Posterior vena cava (tissue), 2 donors: ENCODE measurements at regions of chr10 and their contacts with region 1.

Region 1: DNA sequence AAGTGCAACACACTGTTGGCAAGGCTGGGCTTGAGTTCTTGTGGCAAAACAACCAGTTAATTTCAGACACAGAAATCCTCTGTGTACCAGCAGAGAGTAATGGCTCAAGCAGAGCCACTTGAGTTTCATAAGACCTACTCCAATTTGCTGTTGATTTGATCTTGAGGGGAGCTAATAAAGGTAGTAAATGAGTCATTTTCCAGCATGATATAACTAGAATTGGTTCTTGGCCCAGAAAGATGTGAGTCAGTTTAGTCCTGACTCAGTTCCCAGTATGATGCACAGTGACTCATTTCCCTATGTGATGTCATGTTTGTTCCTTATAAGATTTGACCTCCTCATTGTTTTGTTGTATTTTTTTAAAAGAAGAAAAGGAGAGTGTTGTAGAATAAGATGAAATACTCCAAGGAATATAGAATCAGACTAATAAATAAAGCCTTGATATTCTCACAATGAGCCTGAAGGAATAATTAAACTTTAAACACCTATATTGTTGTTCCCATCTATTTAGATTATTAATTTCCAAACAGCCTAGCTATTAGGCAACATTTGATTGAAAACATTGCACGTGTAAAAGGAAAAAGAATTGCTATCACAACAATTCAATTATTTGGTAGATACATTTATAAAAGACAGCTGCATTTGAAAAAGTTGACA is 186.2 kb downstream of the REEP3 start:
- DNase-seq: no peak

Region 2: GRCh38 chr10:63173468-63174232 is 533.7 kb before region 1 on chr10:
- intact Hi-C with region 1: loop called in 1 of 2 experiments (anchors 10 kb)
- DNase-seq: no peak

Region 3: GRCh38 chr10:63227207-63227915 is 480.0 kb before region 1 on chr10:
- intact Hi-C with region 1: loop called in 1 of 2 experiments (anchors 10 kb)
- DNase-seq: no peak

Region 4: GRCh38 chr10:63465293-63466143 is 241.9 kb before region 1 on chr10 and contains the start of gene JMJD1C:
- intact Hi-C with region 1: loop called in 1 of 2 experiments (anchors 10 kb)
- DNase-seq: peak; percentile 94
- total RNA-seq, gene JMJD1C: 84.1 to 91.1 TPM

Region 5: DNA sequence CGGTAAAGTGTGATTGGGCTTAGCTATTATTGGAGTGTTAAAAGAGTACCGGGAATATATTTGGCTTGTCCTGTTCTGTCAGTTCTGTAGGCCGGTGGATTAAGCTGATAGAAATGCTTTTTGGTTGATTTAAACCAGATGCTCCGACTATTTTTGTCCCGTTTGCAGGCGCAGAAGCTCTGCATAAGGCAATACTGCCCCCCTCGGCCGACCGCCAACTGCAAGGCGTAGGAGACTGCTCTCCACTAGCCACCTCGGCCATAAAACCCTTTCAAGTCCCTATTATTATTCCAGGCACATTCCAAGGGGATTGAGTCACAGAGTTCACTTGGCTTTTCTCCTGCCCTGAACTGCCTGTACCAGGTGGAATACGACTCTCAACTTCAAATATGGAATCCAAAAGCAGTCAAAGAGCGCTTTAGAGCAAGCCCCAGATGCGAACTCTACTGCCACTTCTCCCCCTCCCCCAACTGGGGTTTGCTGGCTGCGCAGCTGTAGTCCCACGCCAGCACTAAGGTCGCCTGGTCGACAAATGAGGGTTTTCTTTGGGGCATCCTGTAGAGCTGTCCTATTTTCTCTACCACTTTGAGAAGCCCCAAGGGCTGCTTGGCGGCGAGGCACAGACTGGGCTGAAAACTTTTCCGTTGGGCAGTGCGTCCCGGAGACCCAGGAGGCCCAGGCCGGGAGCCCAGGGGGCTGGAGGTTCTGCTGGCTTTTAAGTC is 77.9 kb before region 1 on chr10:
- intact Hi-C with region 1: loop called in 1 of 2 experiments (anchors 10 kb)
- DNase-seq: peak; percentile 98